ENCODE measurements at regions of chr4 and their contacts with region 1.

Region 1: DNA sequence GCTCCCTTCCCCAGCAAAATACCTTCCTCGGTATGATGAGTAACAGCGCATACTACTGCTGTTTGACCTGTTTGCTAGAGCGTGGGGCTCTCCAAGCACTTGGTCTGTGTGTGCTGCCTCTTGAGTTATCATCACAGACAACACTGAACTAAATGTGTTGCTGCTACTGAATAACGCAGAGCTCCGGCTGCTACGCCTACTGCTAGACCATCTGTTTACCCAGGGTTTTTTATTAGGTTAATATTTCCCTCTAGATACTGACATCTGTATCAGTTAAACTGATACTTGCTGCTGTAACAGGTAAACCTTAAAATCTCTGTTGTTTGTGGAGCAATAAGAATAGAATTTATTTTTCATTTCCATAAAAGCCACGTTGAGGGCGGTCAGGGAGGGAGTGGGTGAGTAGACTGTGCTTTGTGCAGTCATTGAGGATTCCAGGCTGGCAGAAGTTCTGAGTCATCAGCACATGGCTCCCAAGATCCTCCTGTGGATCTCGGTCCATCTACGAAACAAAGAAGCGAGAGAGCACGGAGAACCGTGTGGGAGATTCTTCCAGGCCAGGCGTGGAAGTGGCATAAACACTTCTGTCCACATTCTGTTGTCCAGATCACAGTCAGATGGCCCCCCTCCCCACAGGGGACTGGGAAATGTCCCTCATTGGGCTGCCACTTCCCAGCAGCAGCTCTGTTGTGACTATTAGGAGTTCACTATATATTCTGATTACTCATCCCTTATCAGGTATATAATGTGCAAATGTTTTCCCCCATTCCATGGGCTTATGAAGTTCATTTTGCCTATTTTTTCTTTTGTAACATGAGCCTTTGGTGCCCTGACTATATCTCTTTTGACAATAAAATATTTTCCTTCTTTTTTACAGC is 14.1 kb downstream of the GRK4 start:
- DNase-seq: no peak
- ATAC-seq: no peak
- H3K4me3 Mint-ChIP-seq: no peak overlapping the region
- H3K27ac Mint-ChIP-seq: no peak overlapping the region
- H3K4me1 Mint-ChIP-seq: no peaks in the 10 kb centered on the region
- H3K27me3 Mint-ChIP-seq: peaks cover 3% of the 10 kb centered on the region

Region 2: GRCh38 chr4:2862528-2862927 is 114.9 kb before region 1 on chr4:
- CTCF ChIA-PET with region 1: no interaction called
- DNase-seq: no peak
- ATAC-seq: no peak
- H3K4me3 Mint-ChIP-seq: no peak overlapping the region
- H3K27ac Mint-ChIP-seq: no peak overlapping the region
- H3K4me1 Mint-ChIP-seq: peaks cover 60% of the 10 kb centered on the region
- H3K27me3 Mint-ChIP-seq: no peaks in the 10 kb centered on the region

Region 3: DNA sequence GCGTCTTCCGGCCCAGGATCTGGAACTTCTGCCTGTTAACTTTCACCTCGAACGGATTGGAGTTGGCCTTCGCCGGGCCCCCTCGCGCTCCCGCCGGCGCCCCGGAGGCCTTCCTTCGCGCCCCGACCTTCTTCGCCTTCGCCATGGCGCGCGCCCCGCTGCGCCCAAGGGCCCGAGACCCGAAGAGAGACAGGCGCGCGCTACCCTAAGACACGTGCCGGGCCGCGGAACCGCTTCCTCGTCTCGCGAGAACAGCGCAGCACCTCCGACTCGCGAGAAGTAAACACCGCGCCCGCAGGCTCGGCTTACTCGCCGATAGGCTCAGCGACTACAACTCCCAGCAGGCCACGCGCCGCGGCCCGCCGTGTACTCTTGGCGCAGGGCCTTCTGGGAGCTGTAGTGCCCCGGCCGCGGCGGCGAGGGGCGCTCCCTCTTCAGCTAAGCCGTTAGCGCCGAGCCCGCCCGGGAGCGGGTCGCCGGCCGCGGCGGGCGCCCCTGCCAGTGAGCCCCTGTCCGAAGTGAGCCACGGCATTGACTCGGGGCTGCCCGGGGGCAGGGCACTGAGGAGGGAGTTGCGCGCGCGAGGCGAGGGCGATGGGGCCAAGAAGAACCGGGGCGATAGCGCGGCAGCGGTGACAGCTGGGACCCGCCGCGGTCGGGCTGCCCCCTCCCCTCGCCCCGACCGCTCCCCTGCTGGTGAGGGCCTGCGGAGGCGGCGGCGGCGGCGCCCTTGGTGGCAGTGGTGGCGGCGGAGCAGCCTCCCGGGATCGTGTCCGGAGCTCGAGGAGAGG is 14.1 kb before region 1 on chr4 and contains the starts of genes GRK4 and NOP14:
- CTCF ChIA-PET with region 1: interaction called, 37 read pairs
- DNase-seq: peak; percentile 99
- ATAC-seq: peak; percentile 87
- H3K4me3 Mint-ChIP-seq: peak within 1 kb of the TSS; percentile 78
- H3K27ac Mint-ChIP-seq: peak within 1 kb of the TSS; percentile 77
- H3K4me1 Mint-ChIP-seq: peaks cover 42% of the 10 kb centered on the region
- H3K27me3 Mint-ChIP-seq: peaks cover 7% of the 10 kb centered on the region
- total RNA-seq, gene GRK4: 3.0 to 4.4 TPM
- total RNA-seq, gene NOP14: 47.9 to 81.0 TPM

Region 4: DNA sequence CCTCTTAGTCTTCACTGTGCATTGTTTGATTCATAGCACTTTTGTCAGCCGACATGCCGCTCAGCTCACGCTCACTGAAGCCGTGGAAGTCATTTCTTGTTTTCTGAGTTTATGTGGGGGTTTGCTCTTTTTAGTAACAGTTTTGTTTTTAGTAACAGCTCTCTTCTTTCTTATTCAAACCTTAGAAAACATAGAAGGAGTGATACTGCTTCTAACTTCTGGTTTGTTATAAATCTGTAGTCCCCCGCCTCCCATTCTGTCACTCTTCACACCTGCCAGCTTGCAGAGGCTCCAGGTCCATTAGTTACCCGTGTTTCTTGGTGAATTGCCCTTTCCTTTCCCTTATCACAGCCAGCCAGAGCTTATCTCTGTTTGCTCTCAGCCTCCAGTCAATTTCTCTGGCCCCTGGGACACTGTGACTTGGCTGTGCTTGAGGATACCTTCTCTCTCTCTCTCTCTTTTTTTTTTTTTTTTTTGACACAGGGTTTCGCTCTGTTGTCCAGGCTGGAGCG is 36.4 kb after region 1 on chr4:
- CTCF ChIA-PET with region 1: interaction called, 10 read pairs
- DNase-seq: peak; percentile 52
- ATAC-seq: peak; percentile 74
- H3K4me3 Mint-ChIP-seq: no peak overlapping the region
- H3K27ac Mint-ChIP-seq: peak overlapping the region; percentile 71
- H3K4me1 Mint-ChIP-seq: peaks cover 21% of the 10 kb centered on the region
- H3K27me3 Mint-ChIP-seq: peaks cover 23% of the 10 kb centered on the region

Region 5: GRCh38 chr4:3037957-3038461 is 60.6 kb after region 1 on chr4:
- CTCF ChIA-PET with region 1: interaction called, 29 read pairs
- DNase-seq: no peak
- ATAC-seq: no peak
- H3K4me3 Mint-ChIP-seq: peak overlapping the region; percentile 12
- H3K27ac Mint-ChIP-seq: peak overlapping the region; percentile 61
- H3K4me1 Mint-ChIP-seq: peaks cover 50% of the 10 kb centered on the region
- H3K27me3 Mint-ChIP-seq: peaks cover 18% of the 10 kb centered on the region

Measured in activated CD8-positive, alpha-beta memory T cell treated with anti-CD3 and anti-CD28 coated beads, Interleukin-2, amount 10 ng/mL, durations not matched to agents 7 days and 5 days (primary cell).